Naive thymus-derived CD4-positive, alpha-beta T cell (primary cell): ENCODE measurements at regions of chr4 and their contacts with region 1.

Region 1: GRCh38 chr4:55866973-55867574 is 13.6 kb downstream of the EXOC1 start:
- DNase-seq: peak in 7 of 9 donors; percentile 21 to 56 (median 50)
- ATAC-seq: peak; percentile 88
- H3K4me3 ChIP-seq: no peak overlapping the region
- H3K4me3 Mint-ChIP-seq: no peak overlapping the region
- H3K27ac ChIP-seq: no peak overlapping the region
- H3K27ac Mint-ChIP-seq: no peak overlapping the region
- H3K4me1 ChIP-seq: no peaks in the 10 kb centered on the region
- H3K4me1 Mint-ChIP-seq: peaks cover 6 to 20% (median 15%) of the 10 kb centered on the region in 7 donors
- H3K27me3 ChIP-seq: no peaks in the 10 kb centered on the region
- H3K27me3 Mint-ChIP-seq: no peaks in the 10 kb centered on the region

Region 2: DNA sequence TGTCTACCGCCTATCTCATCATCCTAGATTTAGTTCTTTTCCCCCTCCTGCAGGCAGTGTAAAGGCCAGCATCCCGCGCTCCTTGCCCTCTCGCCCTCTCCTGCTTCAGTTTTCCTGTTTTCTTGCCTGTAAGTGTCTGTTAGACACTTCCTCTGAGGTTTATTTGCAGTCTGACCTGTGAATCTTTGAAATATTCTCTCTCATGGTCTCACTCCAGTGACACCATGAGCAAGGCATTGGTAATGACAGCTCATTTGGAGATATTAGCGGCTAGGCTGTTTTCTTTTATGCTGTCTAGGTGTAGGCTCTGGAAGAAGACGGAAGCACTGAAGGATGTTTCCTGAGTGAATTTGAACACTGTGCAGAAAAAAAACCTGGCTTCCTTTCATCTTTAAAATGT is 921.2 kb before region 1 on chr4:
- CTCF ChIA-PET with region 1: no interaction called
- POLR2A ChIA-PET with region 1: no interaction called
- intact Hi-C with region 1: no loop called
- DNase-seq: peak in 5 of 9 donors; percentile 10 to 57 (median 45)
- ATAC-seq: peak; percentile 21
- H3K4me3 ChIP-seq: no peak overlapping the region
- H3K4me3 Mint-ChIP-seq: peak overlapping the region in 5 of 10 donors; percentile 11 to 45 (median 26)
- H3K27ac ChIP-seq: peak overlapping the region; percentile 37
- H3K27ac Mint-ChIP-seq: peak overlapping the region in 8 of 9 donors; percentile 46 to 99 (median 87)
- H3K4me1 ChIP-seq: peaks cover 0 to 35% of the 10 kb centered on the region in 2 donors
- H3K4me1 Mint-ChIP-seq: peaks cover 25 to 50% (median 43%) of the 10 kb centered on the region in 7 donors
- H3K27me3 ChIP-seq: no peaks in the 10 kb centered on the region
- H3K27me3 Mint-ChIP-seq: no peaks in the 10 kb centered on the region

Region 3: DNA sequence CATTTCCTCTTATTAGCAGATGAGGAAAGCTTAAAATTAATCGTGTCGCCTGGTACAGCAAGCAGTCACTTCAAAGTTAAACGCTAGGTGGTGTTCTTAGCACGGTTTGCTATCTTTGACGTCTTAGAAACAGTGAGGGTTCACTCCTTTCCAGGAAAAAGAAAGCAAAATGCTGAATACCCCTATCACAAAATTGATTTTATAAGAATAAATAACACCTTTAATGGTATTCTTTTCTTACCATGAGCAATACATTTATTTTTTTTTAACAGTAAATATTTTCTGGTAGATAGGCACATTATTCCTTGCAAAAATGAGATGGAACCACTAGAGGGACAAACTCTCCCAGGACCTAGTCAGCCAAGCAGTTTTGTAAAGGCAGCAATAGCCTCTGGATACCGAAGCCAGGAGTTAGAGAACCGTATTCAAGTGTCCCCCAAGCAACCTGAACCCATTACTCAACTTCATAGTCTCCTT is 895.6 kb before region 1 on chr4:
- CTCF ChIA-PET with region 1: interaction called, 7 read pairs
- POLR2A ChIA-PET with region 1: no interaction called
- intact Hi-C with region 1: loop called (anchors 1 to 5 kb)
- DNase-seq: peak in 4 of 9 donors; percentile 24 to 34 (median 32)
- ATAC-seq: peak; percentile 67
- H3K4me3 ChIP-seq: no peak overlapping the region
- H3K4me3 Mint-ChIP-seq: no peak overlapping the region
- H3K27ac ChIP-seq: no peak overlapping the region
- H3K27ac Mint-ChIP-seq: no peak overlapping the region
- H3K4me1 ChIP-seq: no peaks in the 10 kb centered on the region
- H3K4me1 Mint-ChIP-seq: no peaks in the 10 kb centered on the region
- H3K27me3 ChIP-seq: no peaks in the 10 kb centered on the region
- H3K27me3 Mint-ChIP-seq: peaks cover 0 to 13% (median 9%) of the 10 kb centered on the region in 5 donors

Region 4: GRCh38 chr4:55312489-55313101 is 554.5 kb before region 1 on chr4:
- CTCF ChIA-PET with region 1: interaction called, 9 read pairs
- POLR2A ChIA-PET with region 1: no interaction called
- intact Hi-C with region 1: loop called in 1 of 2 experiments (anchors 1 kb)
- DNase-seq: peak in 7 of 9 donors; percentile 6 to 34 (median 30)
- ATAC-seq: peak; percentile 68
- H3K4me3 ChIP-seq: no peak overlapping the region
- H3K4me3 Mint-ChIP-seq: no peak overlapping the region
- H3K27ac ChIP-seq: no peak overlapping the region
- H3K27ac Mint-ChIP-seq: no peak overlapping the region
- H3K4me1 ChIP-seq: no peaks in the 10 kb centered on the region
- H3K4me1 Mint-ChIP-seq: peaks cover 0 to 4% (median 0%) of the 10 kb centered on the region in 7 donors
- H3K27me3 ChIP-seq: no peaks in the 10 kb centered on the region
- H3K27me3 Mint-ChIP-seq: peaks cover 0 to 7% (median 0%) of the 10 kb centered on the region in 5 donors

Region 5: DNA sequence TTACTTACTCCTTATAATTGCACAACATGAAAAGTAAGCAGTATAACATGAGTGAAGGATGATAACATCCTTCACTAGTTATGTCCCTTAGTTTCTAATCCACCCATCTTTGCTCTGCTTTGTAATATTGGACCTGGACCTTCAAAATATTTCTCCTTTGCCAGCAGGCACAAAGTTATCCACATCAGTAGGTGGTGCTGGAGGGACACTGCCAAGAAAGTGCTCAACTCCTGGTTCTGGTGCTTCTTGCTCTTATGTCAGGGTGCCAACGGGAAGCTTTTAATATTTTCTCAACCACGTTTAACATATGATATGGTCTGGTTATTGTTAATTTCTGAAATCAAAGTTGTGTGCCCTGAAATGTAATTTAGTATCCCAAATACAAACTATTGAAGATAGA is 422.2 kb before region 1 on chr4:
- CTCF ChIA-PET with region 1: interaction called, 3 read pairs
- POLR2A ChIA-PET with region 1: no interaction called
- intact Hi-C with region 1: loop called in 1 of 2 experiments (anchors 2 kb)
- DNase-seq: peak in 1 of 9 donors; percentile 7
- ATAC-seq: no peak
- H3K4me3 ChIP-seq: no peak overlapping the region
- H3K4me3 Mint-ChIP-seq: no peak overlapping the region
- H3K27ac ChIP-seq: no peak overlapping the region
- H3K27ac Mint-ChIP-seq: peak overlapping the region in 1 of 9 donors; percentile 51
- H3K4me1 ChIP-seq: no peaks in the 10 kb centered on the region
- H3K4me1 Mint-ChIP-seq: peaks cover 0 to 15% (median 11%) of the 10 kb centered on the region in 7 donors
- H3K27me3 ChIP-seq: no peaks in the 10 kb centered on the region
- H3K27me3 Mint-ChIP-seq: no peaks in the 10 kb centered on the region

Region 6: DNA sequence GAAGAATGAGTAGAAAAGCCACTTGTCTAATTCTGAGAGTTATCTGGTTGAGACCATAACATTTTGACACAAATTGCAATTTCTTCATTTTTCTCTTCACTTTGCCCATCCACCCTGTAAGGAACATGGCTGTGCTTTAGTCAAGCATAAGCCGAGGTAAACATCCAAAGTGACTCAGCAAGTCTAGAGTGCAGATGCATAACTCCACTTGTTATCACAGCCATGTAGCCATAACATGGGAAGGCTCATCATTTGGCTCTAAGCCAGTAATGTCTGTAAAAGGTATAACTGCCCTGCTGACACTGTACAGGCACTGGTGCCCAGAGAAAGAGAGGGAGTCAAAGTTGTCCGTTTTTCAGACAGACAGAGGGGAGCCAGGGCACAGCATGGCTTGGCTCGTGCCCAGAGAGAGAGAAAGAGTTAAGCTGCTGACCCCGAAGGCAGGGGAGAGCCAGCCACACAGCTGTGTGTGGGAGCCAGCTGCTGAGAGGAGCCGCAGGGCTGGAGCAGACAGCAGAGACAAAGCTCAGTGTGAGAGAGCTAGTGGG is 124.3 kb before region 1 on chr4:
- CTCF ChIA-PET with region 1: no interaction called
- POLR2A ChIA-PET with region 1: no interaction called
- intact Hi-C with region 1: loop called in 1 of 2 experiments (anchors 5 kb)
- DNase-seq: no peak
- ATAC-seq: no peak
- H3K4me3 ChIP-seq: no peak overlapping the region
- H3K4me3 Mint-ChIP-seq: no peak overlapping the region
- H3K27ac ChIP-seq: no peak overlapping the region
- H3K27ac Mint-ChIP-seq: no peak overlapping the region
- H3K4me1 ChIP-seq: no peaks in the 10 kb centered on the region
- H3K4me1 Mint-ChIP-seq: no peaks in the 10 kb centered on the region
- H3K27me3 ChIP-seq: no peaks in the 10 kb centered on the region
- H3K27me3 Mint-ChIP-seq: peaks cover 25 to 46% (median 31%) of the 10 kb centered on the region in 5 donors

Region 7: GRCh38 chr4:55853484-55854046 is 13.5 kb before region 1 on chr4 and contains the start of gene EXOC1:
- CTCF ChIA-PET with region 1: interaction called, 5 read pairs
- POLR2A ChIA-PET with region 1: interaction called, 5 read pairs
- intact Hi-C with region 1: loop called (anchors 1 kb)
- DNase-seq: peak; percentile 93 to 98 (median 94)
- ATAC-seq: peak; percentile 99
- H3K4me3 ChIP-seq: peak within 1 kb of the TSS; percentile 84
- H3K4me3 Mint-ChIP-seq: peak within 1 kb of the TSS in 2 of 10 donors; percentile 34 to 69
- H3K27ac ChIP-seq: peak within 1 kb of the TSS; percentile 87
- H3K27ac Mint-ChIP-seq: peak within 1 kb of the TSS in 7 of 9 donors; percentile 75 to 94 (median 90)
- H3K4me1 ChIP-seq: peaks cover 26 to 31% of the 10 kb centered on the region in 2 donors
- H3K4me1 Mint-ChIP-seq: peaks cover 22 to 48% (median 42%) of the 10 kb centered on the region in 7 donors
- H3K27me3 ChIP-seq: no peaks in the 10 kb centered on the region
- H3K27me3 Mint-ChIP-seq: no peaks in the 10 kb centered on the region
- total RNA-seq, gene EXOC1: 20.3 to 46.7 (median 32.1) TPM

Region 8: GRCh38 chr4:56086073-56086521 is 219.0 kb after region 1 on chr4:
- CTCF ChIA-PET with region 1: no interaction called
- POLR2A ChIA-PET with region 1: no interaction called
- intact Hi-C with region 1: no loop called
- DNase-seq: no peak
- ATAC-seq: no peak
- H3K4me3 ChIP-seq: no peak overlapping the region
- H3K4me3 Mint-ChIP-seq: no peak overlapping the region
- H3K27ac ChIP-seq: no peak overlapping the region
- H3K27ac Mint-ChIP-seq: no peak overlapping the region
- H3K4me1 ChIP-seq: no peaks in the 10 kb centered on the region
- H3K4me1 Mint-ChIP-seq: no peaks in the 10 kb centered on the region
- H3K27me3 ChIP-seq: no peaks in the 10 kb centered on the region
- H3K27me3 Mint-ChIP-seq: peaks cover 0 to 5% (median 0%) of the 10 kb centered on the region in 5 donors